Activated naive CD8-positive, alpha-beta T cell treated with anti-CD3 and anti-CD28 coated beads, Interleukin-2, amount 10 ng/mL, durations not matched to agents 7 days and 5 days (primary cell): ENCODE measurements at regions of chr5 and their contacts with region 1.

Region 1: DNA sequence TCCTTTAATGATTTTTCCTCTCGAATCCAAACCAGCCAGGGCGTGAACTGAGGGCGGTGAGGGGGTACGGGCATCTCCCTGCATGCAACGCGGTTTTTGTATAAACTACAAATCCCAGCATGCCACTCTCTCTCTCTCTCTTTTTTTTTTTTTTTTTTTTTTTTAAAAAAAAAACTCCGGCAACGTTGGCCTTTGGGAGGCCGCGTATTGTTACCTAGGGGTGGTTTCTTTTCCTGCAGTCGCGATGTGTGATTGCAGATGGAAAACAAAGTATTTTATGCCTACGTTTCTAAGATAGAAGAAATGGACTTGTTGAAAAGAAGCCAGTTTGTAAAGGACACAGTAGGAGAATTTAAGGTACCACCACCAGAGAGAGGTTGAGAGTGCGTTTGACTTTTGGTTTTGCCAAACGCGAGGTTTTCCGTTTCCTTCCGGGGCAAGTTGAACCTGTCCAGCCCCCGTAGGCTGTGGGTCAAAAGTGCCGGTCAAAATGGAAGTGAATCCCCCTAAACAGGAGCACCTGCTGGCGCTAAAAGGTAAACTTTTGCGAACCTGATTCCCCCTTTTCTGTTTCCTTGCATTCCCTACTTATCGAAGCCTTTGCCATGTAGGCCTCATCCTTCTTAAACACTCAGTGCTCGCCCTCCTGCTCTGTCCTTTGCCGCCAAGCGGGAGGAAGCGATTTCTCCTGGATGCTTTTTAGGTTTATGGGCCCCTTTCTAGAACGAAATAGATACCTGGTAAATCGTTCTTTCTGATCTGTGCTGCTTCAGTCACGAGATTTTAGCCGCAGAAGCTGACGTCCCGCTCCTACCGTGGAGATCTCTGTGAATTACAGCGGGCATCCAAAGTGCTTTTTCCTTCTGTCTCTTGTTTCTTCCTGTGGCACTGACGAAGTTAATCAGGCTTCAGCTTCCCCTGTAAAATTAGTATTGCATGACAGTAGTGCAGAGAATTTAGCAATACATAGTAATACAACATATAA is at the starts of genes SHLD3 and TRAPPC13:
- DNase-seq: peak; percentile 74
- ATAC-seq: peak; percentile 72
- H3K4me3 Mint-ChIP-seq: peak within 1 kb of the TSS; percentile 97
- H3K27ac Mint-ChIP-seq: peak within 1 kb of the TSS; percentile 98
- H3K4me1 Mint-ChIP-seq: peaks cover 26% of the 10 kb centered on the region
- H3K27me3 Mint-ChIP-seq: no peaks in the 10 kb centered on the region
- total RNA-seq, gene SHLD3: 4.3 to 4.4 TPM
- total RNA-seq, gene TRAPPC13: 18.8 to 24.1 TPM

Region 2: DNA sequence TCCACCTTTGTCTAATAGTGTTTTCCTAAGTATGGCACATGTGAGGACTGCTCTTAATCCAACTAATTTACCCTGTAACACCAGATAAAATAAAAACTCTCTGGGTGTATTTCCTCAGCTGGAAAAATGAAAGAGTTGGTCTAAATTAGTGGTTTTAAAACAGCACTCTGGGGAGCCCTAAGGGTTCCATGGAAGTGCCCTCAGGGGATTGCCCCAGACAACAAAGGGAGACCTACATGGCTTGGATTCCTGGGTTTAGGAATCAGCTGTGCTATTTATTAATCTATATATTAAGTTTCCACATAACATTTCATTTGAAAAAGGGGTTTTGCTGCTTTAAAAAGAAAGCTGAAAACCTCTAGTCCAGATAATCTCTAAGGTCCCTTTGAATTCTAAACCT is 163.4 kb before region 1 on chr5:
- POLR2A ChIA-PET with region 1: no interaction called
- DNase-seq: no peak
- ATAC-seq: no peak
- H3K4me3 Mint-ChIP-seq: no peak overlapping the region
- H3K27ac Mint-ChIP-seq: no peak overlapping the region
- H3K4me1 Mint-ChIP-seq: peaks cover 4% of the 10 kb centered on the region
- H3K27me3 Mint-ChIP-seq: no peaks in the 10 kb centered on the region

Region 3: DNA sequence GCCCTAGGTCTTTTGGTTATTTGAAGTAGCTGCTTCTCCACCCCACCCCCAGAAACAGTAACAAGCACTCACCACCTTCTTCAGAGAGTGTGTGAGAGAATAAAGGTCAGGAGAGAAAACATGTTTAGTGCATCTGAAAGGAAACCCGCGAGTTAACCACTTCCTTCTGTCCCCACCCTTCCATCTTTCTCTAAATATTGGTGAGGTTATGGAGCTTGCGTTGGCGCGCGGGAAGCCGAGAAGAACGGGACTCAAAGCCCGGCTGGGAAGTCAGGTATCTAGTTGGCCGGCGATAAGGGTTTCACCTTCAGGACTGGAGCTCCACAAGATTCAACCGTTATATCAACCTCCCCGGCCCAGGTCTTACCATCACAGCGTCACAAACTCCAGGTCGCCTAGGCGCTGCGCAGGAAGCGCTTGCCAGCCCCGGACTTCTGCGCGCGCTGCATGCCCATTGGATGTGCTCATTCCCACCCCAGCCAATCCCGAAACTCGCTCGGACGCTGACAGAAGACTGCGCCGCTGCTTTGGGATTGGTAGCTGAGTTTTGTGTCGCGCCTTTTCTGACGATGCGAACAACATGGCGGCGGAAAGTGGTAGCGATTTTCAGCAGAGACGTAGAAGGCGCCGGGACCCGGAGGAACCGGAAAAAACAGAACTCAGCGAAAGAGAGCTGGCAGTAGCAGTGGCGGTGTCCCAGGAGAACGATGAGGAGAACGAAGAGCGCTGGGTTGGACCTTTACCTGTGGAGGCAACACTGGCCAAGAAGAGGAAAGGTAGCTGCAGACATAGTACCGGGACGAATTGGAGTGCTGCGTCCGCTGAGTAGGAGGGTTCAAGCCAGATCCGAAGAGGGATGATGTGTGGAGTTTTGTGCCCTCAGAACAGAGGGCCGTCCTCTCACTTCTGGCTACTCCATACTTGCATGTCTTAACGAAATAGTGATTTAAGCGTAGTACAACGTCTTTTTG is 61.8 kb before region 1 on chr5 and contains the starts of genes CENPK and PPWD1:
- POLR2A ChIA-PET with region 1: interaction called, 36 read pairs
- DNase-seq: peak; percentile 92
- ATAC-seq: peak; percentile 98
- H3K4me3 Mint-ChIP-seq: peak within 1 kb of the TSS; percentile 96
- H3K27ac Mint-ChIP-seq: peak within 1 kb of the TSS; percentile 99
- H3K4me1 Mint-ChIP-seq: peaks cover 46% of the 10 kb centered on the region
- H3K27me3 Mint-ChIP-seq: no peaks in the 10 kb centered on the region
- total RNA-seq, gene CENPK: 89.9 to 90.7 TPM
- total RNA-seq, gene PPWD1: 72.7 to 78.6 TPM